ENCODE measurements at regions of chrX and their contacts with region 1.

Region 1: GRCh38 chrX:151753313-151754041 is 18.9 kb downstream of the CNGA2 start:
- DNase-seq: peak; percentile 44
- CTCF ChIP-seq: peak; percentile 55

Region 2: GRCh38 chrX:151852294-151852693 is 98.8 kb after region 1 on chrX:
- CTCF ChIA-PET with region 1: no interaction called
- POLR2A ChIA-PET with region 1: no interaction called
- DNase-seq: no peak
- CTCF ChIP-seq: no peak

Region 3: DNA sequence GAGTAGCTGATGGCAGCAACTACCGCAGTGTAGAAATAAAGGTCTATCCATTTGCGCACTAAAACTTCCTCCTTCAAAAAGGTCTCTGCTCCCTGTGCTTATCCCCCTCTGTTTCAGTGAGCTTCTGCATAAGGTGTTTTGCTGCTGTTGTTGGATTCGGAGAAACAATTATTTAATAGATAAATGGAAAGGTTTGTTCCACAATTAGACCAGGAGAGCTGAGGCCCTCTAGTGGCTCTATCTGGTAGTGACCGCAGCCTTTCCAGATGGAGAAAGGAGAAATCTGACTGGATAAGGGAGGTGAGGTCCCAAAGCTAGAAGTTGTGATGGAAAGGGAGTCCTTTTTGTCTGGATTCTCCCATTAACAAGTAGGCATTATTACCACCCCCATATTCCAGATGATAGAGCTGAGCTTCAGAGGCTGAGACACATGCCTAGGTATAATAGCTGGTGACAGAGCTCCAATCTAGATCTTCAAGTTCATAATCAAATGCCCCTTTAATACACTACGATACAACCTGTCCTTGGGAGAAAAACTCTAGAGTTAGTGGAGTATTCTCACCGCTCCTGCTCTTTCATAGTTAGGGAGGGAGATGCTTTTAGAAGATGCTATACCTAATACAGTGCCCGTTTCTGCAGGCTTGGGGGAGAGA is 879.1 kb after region 1 on chrX:
- CTCF ChIA-PET with region 1: interaction called, 16 read pairs
- POLR2A ChIA-PET with region 1: no interaction called
- DNase-seq: no peak
- CTCF ChIP-seq: peak; percentile 60